BJ (cell line): ENCODE measurements at regions of chr13 and their contacts with region 1.

Region 1: DNA sequence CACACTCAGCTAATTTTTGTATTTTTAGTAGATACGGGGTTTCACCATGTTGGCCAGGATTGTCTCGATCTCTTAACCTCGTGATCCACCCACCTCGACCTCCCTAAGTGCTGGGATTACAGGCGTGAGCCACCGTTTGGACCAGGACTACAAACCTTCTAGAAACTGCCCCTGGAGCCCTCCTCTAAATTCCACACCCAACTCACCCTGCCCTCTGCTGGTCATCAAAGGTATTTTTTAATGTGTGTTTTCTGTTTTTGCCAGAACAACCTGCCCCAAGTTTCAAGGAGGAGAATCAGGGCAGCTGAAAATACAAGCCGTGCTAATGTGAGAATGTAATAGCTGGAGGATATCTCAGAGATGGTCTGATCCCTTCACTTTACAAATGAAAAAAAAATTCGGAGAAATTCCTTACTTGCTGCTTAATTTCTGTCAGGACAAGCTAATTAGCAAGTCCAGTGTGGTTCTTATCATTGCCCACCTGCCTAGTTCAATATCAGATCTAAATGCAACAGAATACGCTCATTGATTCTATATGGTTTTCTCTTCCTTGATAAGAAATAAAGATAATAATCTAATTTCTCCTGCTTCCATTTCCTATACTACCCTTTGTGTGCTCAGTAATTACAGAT is 4.1 kb downstream of the ATP8A2 start:
- DNase-seq: no peak
- H3K4me3 ChIP-seq: no peak overlapping the region
- H3K27me3 ChIP-seq: peaks cover 23% of the 10 kb centered on the region
- CTCF ChIP-seq: peak; percentile 69

Region 2: DNA sequence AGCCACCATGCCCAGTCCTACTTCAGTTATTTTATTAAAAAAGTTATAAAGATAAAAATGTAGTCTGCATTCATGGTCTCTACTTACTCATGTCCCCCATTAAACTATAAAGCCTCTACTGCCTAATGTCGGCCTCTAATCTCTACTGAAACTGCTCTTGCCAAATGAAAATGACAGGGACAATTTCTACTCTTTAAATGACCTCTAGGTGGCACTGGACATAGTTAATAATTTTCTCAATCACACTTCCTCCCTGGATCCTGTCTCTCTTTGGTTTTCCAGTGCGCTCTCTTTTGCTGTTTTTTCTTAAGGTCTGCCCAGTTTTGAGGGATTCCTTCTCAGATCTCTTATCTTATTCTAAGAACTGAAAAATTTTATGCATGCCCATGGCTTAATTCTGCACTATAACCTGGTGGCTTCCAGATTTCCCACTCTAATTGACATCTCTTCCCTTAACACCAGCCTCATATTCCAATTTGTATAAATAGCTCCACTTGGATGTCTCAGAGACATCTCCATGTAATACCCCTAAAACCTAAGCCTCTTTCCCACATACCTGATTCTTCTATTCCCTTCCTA is 142.8 kb before region 1 on chr13:
- CTCF ChIA-PET with region 1: interaction called, 26 read pairs
- POLR2A ChIA-PET with region 1: no interaction called
- DNase-seq: no peak
- H3K4me3 ChIP-seq: no peak overlapping the region
- H3K27me3 ChIP-seq: no peaks in the 10 kb centered on the region
- CTCF ChIP-seq: peak; percentile 50

Region 3: DNA sequence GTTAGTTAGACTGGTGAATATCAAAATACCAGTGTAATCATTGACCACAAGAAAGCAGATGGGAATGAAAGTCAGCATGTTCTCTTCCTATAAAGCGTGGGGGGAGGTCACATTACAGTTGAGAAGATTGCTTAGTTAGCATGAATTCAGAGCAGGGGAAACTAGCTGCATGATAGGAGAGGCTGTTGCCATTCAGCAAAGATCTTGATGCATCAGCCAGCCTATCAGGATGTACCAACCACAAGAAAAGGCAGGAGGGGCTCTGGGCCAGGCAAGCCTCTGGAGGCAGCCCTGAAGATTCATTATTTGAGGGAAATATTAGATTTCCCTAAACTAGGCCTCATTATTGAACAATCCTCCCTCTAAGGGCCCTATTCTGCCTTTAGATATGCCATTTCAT is 83.5 kb before region 1 on chr13:
- CTCF ChIA-PET with region 1: no interaction called
- POLR2A ChIA-PET with region 1: no interaction called
- DNase-seq: no peak
- H3K4me3 ChIP-seq: no peak overlapping the region
- H3K27me3 ChIP-seq: peaks cover 5% of the 10 kb centered on the region
- CTCF ChIP-seq: no peak

Region 4: GRCh38 chr13:25391932-25392331 is 16.1 kb after region 1 on chr13:
- CTCF ChIA-PET with region 1: interaction called, 11 read pairs
- POLR2A ChIA-PET with region 1: no interaction called
- DNase-seq: no peak
- H3K4me3 ChIP-seq: no peak overlapping the region
- H3K27me3 ChIP-seq: no peaks in the 10 kb centered on the region
- CTCF ChIP-seq: no peak